ENCODE measurements at regions of chr14 and their contacts with region 1.

Region 1: DNA sequence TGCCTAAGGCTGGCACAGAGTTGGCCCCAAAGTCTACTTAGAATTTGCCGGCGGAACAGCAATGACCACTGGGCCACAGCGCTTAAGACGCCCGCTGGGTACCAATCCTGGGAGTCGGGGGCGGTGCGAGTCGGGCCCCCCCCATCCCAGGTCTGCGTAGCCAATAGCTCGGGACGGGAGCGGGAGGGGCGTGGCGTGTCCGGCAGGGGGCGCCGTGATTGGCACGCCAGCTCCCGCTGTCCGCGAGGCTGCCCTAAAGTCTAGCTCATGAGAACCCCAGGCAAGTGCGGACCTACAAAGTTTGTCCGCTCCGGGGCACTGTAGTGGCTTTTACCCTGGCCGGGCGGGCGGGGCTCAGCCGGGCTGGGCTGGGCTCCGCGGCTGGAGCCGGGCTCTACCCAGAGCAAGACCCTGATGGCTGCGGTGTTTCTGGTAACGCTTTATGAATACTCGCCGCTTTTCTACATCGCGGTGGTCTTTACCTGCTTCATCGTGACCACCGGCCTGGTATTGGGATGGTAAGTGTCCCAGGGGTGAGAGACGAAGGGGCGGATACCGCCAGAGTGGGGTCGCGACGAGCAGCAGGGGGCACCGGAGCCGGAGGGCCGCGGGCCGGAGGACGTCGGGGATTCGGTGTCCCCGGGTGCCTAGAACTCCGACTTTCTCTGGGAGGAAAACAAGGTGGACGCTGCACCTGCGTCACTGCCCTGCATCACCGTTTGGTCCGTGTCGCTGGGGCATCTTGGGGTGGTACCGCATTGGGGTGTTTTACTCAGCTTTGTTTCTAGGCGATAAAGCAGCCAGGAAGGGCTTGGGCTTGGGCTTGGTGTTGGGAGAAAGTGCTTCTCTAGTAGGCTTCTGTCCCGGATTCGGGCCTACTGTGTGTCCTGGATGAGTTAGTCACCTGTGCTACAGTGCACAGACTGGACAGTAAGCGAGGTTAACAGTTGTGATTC is at the start of gene CGRRF1:
- DNase-seq: peak; percentile 100
- ATAC-seq: peak; percentile 97
- H3K4me3 ChIP-seq: peak within 1 kb of the TSS; percentile 89
- H3K27ac ChIP-seq: no peak within 1 kb of the TSS
- H3K4me1 ChIP-seq: peaks cover 19% of the 10 kb centered on the region
- H3K27me3 ChIP-seq: no peaks in the 10 kb centered on the region
- CTCF ChIP-seq: peak; percentile 67
- total RNA-seq, gene CGRRF1: 31.3 and 31.5 TPM in 2 replicates

Region 2: GRCh38 chr14:54440873-54441868 is 68.7 kb before region 1 on chr14 and contains the start of gene CNIH1:
- CTCF ChIA-PET with region 1: no interaction called
- POLR2A ChIA-PET with region 1: no interaction called
- intact Hi-C with region 1: no loop called
- DNase-seq: peak; percentile 99
- ATAC-seq: peak; percentile 95
- H3K4me3 ChIP-seq: peak within 1 kb of the TSS; percentile 74
- H3K27ac ChIP-seq: peak within 1 kb of the TSS; percentile 74
- H3K4me1 ChIP-seq: peaks cover 52% of the 10 kb centered on the region
- H3K27me3 ChIP-seq: no peaks in the 10 kb centered on the region
- CTCF ChIP-seq: peak; percentile 99
- total RNA-seq, gene CNIH1: 139 and 194 TPM in 2 replicates

Region 3: DNA sequence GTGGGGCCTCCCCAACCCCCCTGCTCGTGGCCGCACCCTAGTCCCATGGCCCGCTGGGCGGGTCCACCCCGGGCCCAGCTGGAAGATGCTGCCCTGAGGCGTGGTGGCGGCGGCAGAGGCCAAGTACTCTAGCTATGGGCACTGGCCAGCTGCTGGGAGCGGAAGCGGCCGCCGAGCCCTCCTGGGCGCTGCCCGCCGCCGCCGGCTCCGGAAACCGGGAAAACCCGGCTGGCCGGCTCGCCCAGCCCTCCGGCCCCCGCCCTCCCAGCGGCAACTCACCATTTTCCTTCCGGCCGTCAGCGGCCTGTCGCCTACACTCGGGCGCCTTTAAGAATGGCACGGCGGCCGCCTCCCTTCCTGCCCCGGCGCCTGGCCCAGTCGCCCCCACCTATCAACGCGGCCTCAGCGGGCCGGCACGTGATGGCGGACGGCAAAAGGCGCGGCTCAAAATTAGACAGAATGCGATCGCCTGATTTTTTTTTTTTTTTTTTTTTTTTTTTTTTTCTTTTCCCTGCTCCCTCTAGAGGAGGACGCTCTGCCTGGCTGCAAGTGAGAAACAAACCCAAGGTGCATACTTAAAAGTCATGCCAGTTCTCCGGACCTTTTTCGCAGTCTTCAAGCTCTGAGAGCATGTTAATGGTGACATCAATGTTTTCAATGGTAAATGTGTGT is 21.0 kb before region 1 on chr14 and contains the start of gene GMFB:
- CTCF ChIA-PET with region 1: interaction called, 9 read pairs
- POLR2A ChIA-PET with region 1: interaction called, 36 read pairs
- intact Hi-C with region 1: loop called (anchors 1 kb)
- DNase-seq: peak; percentile 99
- ATAC-seq: peak; percentile 91
- H3K4me3 ChIP-seq: peak within 1 kb of the TSS; percentile 80
- H3K27ac ChIP-seq: peak within 1 kb of the TSS; percentile 86
- H3K4me1 ChIP-seq: peaks cover 42% of the 10 kb centered on the region
- H3K27me3 ChIP-seq: no peaks in the 10 kb centered on the region
- CTCF ChIP-seq: peak; percentile 68
- total RNA-seq, gene GMFB: 45.2 and 85.2 TPM in 2 replicates

Region 4: GRCh38 chr14:54529811-54530210 is 20.0 kb after region 1 on chr14:
- CTCF ChIA-PET with region 1: interaction called, 5 read pairs
- POLR2A ChIA-PET with region 1: interaction called, 17 read pairs
- intact Hi-C with region 1: no loop called
- DNase-seq: peak; percentile 87
- ATAC-seq: peak; percentile 97
- H3K4me3 ChIP-seq: no peak overlapping the region
- H3K27ac ChIP-seq: no peak overlapping the region
- H3K4me1 ChIP-seq: peaks cover 8% of the 10 kb centered on the region
- H3K27me3 ChIP-seq: no peaks in the 10 kb centered on the region
- CTCF ChIP-seq: no peak

Region 5: DNA sequence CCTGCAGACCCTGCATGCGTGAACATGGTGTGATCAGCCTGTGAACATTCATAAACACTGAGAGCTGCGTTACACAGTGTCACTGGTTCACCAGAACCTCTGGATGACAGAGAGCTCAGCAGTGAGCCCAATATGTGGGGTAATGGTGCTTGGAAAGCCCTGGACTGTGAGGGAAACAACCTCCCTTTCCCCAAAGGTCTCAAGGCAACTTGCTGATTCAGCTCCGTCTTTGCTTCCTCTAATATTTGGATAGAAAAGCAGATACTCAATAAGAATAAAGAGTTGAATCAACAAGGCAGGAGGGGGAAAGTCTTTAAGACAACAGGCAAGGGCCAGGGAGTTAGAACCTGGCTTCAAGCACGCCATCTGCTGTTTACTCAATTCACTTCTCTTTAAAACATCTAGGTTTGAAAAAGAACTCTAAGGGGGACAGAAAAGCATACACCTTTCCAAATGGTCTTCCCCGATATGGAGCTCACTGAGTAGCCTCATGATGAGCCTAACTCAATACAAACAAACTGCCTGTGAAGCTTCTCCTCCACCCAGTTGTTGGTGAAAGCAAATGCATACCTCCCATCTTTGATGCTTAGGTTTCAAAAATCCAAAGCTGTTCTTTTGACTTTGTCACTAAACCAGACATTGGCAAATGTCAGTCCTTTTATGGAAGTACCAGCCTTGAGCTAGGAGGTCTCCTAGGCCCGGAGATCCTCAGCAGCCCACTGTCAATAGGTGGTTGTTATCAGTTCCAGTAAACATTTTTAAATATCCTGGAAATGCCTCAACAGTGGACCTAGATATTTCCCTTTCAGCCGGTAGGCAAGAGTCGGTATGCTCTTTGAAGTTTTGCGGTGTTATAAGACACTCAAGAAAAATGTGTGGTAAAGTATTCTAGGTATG is 133.2 kb after region 1 on chr14:
- CTCF ChIA-PET with region 1: no interaction called
- POLR2A ChIA-PET with region 1: no interaction called
- intact Hi-C with region 1: loop called (anchors 5 kb)
- DNase-seq: peak; percentile 46
- ATAC-seq: no peak
- H3K4me3 ChIP-seq: no peak overlapping the region
- H3K27ac ChIP-seq: no peak overlapping the region
- H3K4me1 ChIP-seq: peaks cover 20% of the 10 kb centered on the region
- H3K27me3 ChIP-seq: no peaks in the 10 kb centered on the region
- CTCF ChIP-seq: peak; percentile 63

Region 6: DNA sequence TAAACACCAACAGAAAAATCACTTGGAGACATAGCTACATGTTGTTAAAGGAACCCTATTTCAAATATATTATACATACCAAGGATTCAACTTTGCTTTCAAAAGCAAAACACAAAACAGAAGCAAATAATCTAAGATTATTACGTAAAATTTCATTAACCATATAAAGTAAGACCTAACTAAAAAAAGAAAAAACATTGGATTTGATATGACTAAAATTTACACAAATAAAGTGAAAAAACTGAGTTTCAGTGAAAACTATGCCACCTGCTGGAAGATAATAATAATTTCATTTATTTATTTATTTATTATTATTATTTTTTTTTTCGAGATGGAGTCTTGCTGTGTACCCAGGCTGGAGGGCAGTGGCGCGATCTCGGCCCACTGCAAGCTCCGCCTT is 471.9 kb after region 1 on chr14:
- CTCF ChIA-PET with region 1: no interaction called
- POLR2A ChIA-PET with region 1: no interaction called
- intact Hi-C with region 1: loop called (anchors 10 kb)
- DNase-seq: peak; percentile 42
- ATAC-seq: no peak
- H3K4me3 ChIP-seq: no peak overlapping the region
- H3K27ac ChIP-seq: no peak overlapping the region
- H3K4me1 ChIP-seq: no peaks in the 10 kb centered on the region
- H3K27me3 ChIP-seq: no peaks in the 10 kb centered on the region
- CTCF ChIP-seq: peak; percentile 59

Measured in PC-3 (cell line).